ENCODE measurements at regions of chr2 and their contacts with region 1.

Region 1: DNA sequence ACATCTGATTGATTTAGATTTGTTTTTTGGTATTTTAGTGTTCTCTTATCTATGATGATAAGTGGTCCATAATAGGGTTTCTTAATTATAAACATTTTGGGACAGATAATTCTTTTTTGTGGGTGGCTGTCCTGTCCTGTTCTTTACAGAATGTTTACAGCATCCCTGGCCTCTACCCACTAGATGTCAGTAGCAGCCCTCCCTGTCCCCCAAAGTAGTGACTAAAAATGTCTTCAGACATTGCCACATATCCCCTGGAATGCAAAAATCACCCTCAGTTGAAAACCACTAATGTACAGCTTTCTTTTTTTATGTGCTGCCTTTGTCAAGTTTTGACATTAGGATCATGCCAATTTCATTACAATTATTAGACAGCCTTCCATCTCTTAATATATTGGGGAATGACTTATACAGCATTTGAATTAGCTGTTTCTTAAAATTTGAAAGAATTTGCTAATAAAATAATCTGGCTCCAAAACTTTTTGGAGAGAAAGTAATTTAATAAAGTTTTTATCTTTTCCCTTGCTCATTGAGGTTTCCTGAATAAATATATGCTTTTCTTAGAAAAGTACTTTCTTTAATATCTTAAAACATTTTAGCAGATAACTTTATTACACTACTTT is 19.5 kb downstream of the WIPF1 start:
- DNase-seq: peak in 1 of 2 experiments; percentile 36
- H3K4me3 ChIP-seq: no peak overlapping the region
- H3K4me3 Mint-ChIP-seq: no peak overlapping the region
- H3K27ac Mint-ChIP-seq: no peak overlapping the region
- H3K4me1 ChIP-seq: no peaks in the 10 kb centered on the region
- H3K4me1 Mint-ChIP-seq: no peaks in the 10 kb centered on the region
- H3K27me3 ChIP-seq: no peaks in the 10 kb centered on the region
- H3K27me3 Mint-ChIP-seq: no peaks in the 10 kb centered on the region
- CTCF ChIP-seq: peak; percentile 21 to 60

Region 2: DNA sequence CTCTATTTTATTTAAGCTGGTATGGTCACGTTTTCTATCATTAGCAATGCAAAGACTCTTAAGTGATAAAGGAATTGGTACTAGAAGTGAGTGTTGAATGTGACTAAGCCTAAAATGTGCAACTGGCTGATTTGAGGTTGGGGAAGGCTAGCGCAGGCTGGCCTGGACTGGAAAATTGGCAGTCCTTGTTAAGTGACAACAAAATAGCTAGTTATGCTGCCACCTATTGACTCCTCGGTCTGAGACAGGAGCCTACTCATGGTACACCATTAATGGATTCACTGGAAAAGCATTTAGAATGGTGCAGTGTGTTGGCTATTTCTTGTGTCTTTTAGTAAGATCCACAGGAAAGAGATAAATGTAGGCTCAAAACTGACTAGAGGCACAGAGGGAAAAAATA is 25.2 kb after region 1 on chr2:
- CTCF ChIA-PET with region 1: interaction called, 4 read pairs
- POLR2A ChIA-PET with region 1: no interaction called
- intact Hi-C with region 1: loop called (anchors 1 kb)
- DNase-seq: peak; percentile 43 to 49
- H3K4me3 ChIP-seq: no peak overlapping the region
- H3K4me3 Mint-ChIP-seq: no peak overlapping the region
- H3K27ac Mint-ChIP-seq: no peak overlapping the region
- H3K4me1 ChIP-seq: no peaks in the 10 kb centered on the region
- H3K4me1 Mint-ChIP-seq: no peaks in the 10 kb centered on the region
- H3K27me3 ChIP-seq: no peaks in the 10 kb centered on the region
- H3K27me3 Mint-ChIP-seq: no peaks in the 10 kb centered on the region
- CTCF ChIP-seq: peak; percentile 53 to 59

Region 3: DNA sequence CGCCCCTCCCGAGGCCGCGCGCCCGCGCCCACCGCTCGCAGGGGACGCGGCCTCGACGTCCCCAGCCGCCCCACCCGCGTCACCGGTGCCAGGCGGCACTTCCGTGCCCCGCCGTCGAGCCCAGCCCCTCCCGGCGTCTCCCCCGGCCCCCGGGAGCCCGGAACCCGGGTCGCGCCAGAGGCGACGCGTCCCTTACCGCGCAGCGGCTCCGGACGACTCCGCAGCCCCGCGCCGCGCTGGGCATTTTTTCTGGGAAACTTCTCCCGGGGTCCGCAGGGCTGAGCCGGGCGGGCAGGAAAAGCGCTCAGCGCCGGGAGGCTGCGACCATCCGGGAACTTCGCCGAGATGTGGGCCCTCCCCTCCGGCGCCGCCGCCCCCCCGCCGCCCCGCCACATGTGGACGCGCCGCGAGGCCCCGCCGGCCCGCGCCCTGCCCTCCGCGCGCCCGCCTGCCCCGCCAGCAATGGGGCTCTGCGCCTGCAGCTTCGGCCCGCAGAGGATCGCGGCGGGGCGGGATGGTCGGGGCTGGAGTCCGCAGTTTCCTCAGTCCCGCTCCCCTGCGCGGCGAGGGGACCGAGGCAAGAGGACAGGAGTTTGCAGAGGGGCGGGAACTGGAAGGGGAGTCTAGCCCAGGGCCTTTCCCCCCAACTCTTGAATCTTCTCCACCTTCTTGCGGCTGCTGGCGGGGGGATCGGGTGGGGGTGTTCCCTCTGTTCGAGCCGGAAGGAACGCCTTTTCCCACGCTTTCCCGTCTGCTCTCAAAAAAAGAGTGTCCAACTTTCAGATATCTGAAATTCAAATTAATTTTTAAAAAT is 104.7 kb after region 1 on chr2:
- CTCF ChIA-PET with region 1: no interaction called
- POLR2A ChIA-PET with region 1: interaction called, 8 read pairs
- intact Hi-C with region 1: loop called (anchors 1 kb)
- DNase-seq: peak in 1 of 2 experiments; percentile 58
- H3K4me3 ChIP-seq: peak overlapping the region; percentile 60
- H3K4me3 Mint-ChIP-seq: peak overlapping the region; percentile 85
- H3K27ac Mint-ChIP-seq: peak overlapping the region; percentile 40
- H3K4me1 ChIP-seq: 0 out of 2 replicates have a peak, but pooled peaks cover 11% of the 10 kb centered on the region
- H3K4me1 Mint-ChIP-seq: peaks cover 15% of the 10 kb centered on the region
- H3K27me3 ChIP-seq: no peaks in the 10 kb centered on the region; the same call in 1 of the 2 replicates
- H3K27me3 Mint-ChIP-seq: peaks cover 9% of the 10 kb centered on the region
- CTCF ChIP-seq: no peak

Measured in Caco-2 (cell line).